Heart right ventricle (tissue), 16 donors: ENCODE measurements at regions of chr20 and their contacts with region 1.

Region 1: GRCh38 chr20:47379433-47380150 is 23.1 kb upstream of the ZMYND8 start:
- DNase-seq: no peak
- ATAC-seq: no peak
- H3K4me3 ChIP-seq: no peak overlapping the region
- H3K27ac ChIP-seq: no peak overlapping the region
- H3K4me1 ChIP-seq: peaks cover 0 to 17% (median 9%) of the 10 kb centered on the region in 9 donors
- H3K27me3 ChIP-seq: no peaks in the 10 kb centered on the region
- CTCF ChIP-seq: no peak

Region 2: DNA sequence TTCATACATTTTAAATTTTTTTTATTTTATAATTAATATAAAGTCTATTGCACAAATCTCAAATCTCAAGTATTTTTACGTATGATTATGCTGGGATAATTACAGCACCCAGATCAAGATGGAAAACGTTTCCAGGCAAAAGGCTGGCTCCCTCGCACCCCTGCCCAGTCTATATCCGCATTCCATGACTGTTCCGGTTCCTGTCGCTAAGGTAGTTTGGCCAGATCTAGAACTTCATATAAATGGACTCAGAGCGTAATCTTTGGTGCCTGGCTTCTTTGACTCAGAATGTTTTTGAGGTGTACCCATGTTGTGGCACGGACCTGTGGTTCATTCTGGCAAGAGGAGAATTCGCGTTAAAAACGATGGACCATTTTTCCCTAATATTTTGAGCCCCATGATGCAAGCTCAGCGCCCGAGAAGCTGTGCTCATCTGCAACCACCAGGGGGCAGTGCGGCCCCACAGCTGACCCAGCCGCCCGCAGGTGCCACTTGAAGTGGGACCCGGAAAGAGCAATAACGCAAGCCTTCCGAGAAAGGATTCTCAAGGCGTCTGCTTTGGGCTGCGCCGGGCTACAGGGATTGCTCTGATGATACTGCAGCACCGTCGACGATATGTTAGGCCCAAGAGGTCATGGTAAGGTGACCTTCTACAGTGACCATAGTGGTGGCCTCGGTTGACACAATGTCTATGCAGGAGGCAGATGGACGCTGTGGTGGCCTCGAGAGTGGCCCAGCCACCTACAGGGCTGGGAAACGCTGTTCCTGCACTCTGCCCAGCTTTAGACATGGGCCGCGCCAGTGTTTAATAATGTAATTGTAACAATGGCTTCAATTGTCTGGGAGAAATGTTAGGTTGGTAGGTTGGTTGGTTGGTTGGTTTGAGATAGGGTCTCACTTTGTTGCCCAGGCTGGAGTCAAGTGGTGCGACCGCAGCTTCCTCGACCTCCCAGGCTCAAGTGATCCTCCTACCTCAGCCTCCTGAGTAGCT is 183.2 kb before region 1 on chr20:
- intact Hi-C with region 1: loop called (anchors 1 to 10 kb)
- DNase-seq: peak; percentile 66 to 73
- ATAC-seq: peak; percentile 63 to 89 (median 82)
- H3K4me3 ChIP-seq: peak overlapping the region in 1 of 10 donors; percentile 15
- H3K27ac ChIP-seq: no peak overlapping the region
- H3K4me1 ChIP-seq: peaks cover 0 to 16% (median 12%) of the 10 kb centered on the region in 9 donors
- H3K27me3 ChIP-seq: no peaks in the 10 kb centered on the region
- CTCF ChIP-seq: peak; percentile 92 to 98 (median 94)

Region 3: DNA sequence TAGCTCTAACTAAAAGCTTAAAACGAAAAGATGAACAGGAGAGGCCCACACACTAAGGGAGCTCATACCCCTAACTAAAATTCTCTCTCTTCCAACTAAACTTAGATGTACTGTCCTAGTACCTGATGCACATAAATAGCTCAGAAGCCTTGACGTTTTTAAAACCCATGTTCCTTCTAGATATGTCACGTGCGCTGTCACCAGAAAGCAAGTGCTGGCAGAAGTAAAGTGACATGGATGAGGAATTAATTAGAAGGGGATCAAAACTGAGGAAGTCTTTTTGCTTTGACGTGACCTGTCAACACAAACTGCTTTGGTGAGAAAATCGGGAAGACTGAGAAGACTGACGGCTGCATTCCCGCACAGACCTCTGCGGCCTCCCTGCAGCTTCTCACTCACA is 165.6 kb before region 1 on chr20:
- intact Hi-C with region 1: loop called in 1 of 10 experiments (anchors 5 kb)
- DNase-seq: no peak
- ATAC-seq: peak in 7 of 8 donors; percentile 54 to 85 (median 65)
- H3K4me3 ChIP-seq: no peak overlapping the region
- H3K27ac ChIP-seq: peak overlapping the region; percentile 24 to 78 (median 64)
- H3K4me1 ChIP-seq: peaks cover 0 to 48% (median 9%) of the 10 kb centered on the region in 9 donors
- H3K27me3 ChIP-seq: no peaks in the 10 kb centered on the region
- CTCF ChIP-seq: no peak

Region 4: DNA sequence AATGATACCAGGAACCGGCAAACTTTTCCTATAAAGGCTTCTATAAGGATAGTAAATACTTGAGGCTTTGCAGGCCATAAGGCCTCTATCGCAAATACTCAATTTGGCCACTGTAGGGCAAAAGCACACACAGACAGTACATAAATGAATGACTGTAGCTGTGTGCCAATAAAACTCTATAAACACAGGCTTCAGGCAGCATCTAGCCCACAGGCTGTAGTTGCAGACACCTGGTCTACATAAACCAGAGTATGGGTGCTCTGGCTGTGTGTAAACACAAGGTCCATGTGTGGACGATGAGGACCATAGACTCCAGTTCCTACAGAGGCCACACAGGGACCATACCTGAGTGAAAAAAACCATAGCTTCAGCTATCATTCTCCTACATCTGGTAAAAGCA is 75.3 kb before region 1 on chr20:
- intact Hi-C with region 1: loop called in 1 of 10 experiments (anchors 5 kb)
- DNase-seq: no peak
- ATAC-seq: peak in 6 of 8 donors; percentile 24 to 43 (median 36)
- H3K4me3 ChIP-seq: no peak overlapping the region
- H3K27ac ChIP-seq: peak overlapping the region in 9 of 10 donors; percentile 37 to 68 (median 54)
- H3K4me1 ChIP-seq: peaks cover 12 to 39% (median 32%) of the 10 kb centered on the region in 9 donors
- H3K27me3 ChIP-seq: no peaks in the 10 kb centered on the region
- CTCF ChIP-seq: peak in 1 of 9 donors; percentile 23